ENCODE measurements at regions of chr2 and their contacts with region 1.

Region 1: GRCh38 chr2:168920504-168921157 is 19.5 kb downstream of the G6PC2 start:
- DNase-seq: no peak
- H3K4me3 ChIP-seq: no peak overlapping the region
- H3K27ac ChIP-seq: no peak overlapping the region
- H3K4me1 ChIP-seq: no peaks in the 10 kb centered on the region
- H3K27me3 ChIP-seq: no peaks in the 10 kb centered on the region
- CTCF ChIP-seq: peak in 2 of 3 experiments; percentile 44 to 56; a peak in 2 of 4 replicates
- EP300 ChIP-seq: no peak
- POLR2A ChIP-seq: no peak
- RAD21 ChIP-seq: peak; percentile 73 to 78

Region 2: GRCh38 chr2:168773719-168774521 is 146.7 kb before region 1 on chr2:
- CTCF ChIA-PET with region 1: interaction called, 22 read pairs
- POLR2A ChIA-PET with region 1: no interaction called
- DNase-seq: peak in 1 of 2 experiments; percentile 82
- H3K4me3 ChIP-seq: no peak overlapping the region
- H3K27ac ChIP-seq: no peak overlapping the region
- H3K4me1 ChIP-seq: no peaks in the 10 kb centered on the region
- H3K27me3 ChIP-seq: no peaks in the 10 kb centered on the region
- CTCF ChIP-seq: peak; percentile 81 to 91 (median 91)
- EP300 ChIP-seq: no peak
- POLR2A ChIP-seq: no peak
- RAD21 ChIP-seq: peak; percentile 84 to 94

Region 3: GRCh38 chr2:168907940-168908662 is 12.5 kb before region 1 on chr2:
- CTCF ChIA-PET with region 1: interaction called, 10 read pairs
- POLR2A ChIA-PET with region 1: no interaction called
- DNase-seq: no peak
- H3K4me3 ChIP-seq: no peak overlapping the region; a peak in 1 of 8 replicates
- H3K27ac ChIP-seq: no peak overlapping the region
- H3K4me1 ChIP-seq: peaks cover 12 to 28% (median 25%) of the 10 kb centered on the region in 4 experiments
- H3K27me3 ChIP-seq: peaks cover 0 to 2% (median under 1%) of the 10 kb centered on the region in 4 experiments; a peak in 2 of 7 replicates
- CTCF ChIP-seq: no peak
- EP300 ChIP-seq: no peak
- POLR2A ChIP-seq: no peak
- RAD21 ChIP-seq: no peak

Measured in H1 (cell line).